ENCODE measurements at regions of chr7 and their contacts with region 1.

Region 1: DNA sequence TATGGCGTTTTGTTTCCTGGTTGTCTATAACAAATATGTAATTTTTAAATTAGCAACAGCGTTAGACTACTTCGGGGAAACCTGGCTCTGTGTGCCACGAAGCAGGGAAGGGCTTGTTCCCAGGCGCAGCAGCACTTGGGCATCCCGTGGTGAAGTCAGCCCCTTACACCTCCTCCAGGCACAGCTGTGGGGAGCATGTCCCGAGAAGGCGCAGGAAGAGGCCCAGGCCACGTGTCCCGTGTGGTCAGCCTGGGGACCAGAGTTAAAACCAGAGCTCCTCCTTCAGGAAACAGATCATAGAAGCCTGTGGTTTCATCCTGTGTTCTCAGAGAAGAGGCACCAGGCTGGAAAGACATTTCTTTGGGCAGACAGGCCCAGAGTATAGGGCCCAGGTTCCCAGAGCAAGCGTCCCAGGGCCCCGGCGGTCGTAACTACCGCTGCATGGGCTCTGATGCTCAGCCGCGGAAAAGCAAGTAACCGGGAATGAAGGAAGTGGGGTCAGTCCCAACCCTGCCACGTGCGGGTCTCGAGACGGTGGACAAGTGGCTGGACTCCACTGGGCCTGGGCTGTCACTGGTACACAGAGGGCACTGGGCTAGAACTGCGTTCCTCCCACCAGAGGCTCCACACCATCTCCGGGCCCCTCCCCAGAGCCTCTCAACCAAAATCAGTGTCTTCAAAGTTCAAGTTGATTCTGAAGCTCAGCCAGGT is 7.1 kb downstream of the NUDT1 start:
- DNase-seq: peak; percentile 78
- ATAC-seq: peak; percentile 73

Region 2: DNA sequence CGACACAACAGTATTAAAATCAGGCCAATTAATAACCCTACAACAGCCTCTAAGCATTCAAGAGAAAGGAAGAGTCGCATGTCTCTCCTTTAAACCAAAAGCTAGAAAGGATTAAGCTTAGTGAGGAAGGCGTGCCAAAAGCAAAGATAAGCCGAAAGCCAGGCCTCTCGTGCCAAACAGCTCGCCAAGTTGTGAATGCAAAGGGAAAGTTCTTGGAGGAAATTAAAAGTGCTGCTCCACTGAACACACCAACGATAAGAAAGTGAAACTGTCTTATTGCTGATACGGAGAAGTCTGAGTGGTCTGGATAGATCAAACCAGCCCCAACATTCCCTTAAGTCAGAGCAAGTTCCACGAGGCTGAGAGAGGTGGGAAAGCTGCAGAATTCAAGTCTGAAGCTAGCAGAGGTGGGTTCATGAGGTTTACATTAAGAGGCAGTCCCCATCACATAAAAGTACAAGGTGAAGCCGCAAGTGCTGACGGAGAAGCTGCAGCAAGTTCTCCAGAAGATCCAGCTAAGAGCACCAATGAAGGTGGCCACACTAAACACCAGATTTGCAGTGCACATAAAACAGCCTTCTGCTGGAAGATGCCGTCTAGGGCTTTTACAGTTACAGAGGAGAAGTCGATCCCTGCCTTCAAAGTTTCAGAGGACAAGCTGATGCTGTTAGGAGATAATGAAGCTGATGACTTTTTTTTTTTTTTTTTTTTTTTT is 211.2 kb before region 1 on chr7:
- intact Hi-C with region 1: no loop called
- DNase-seq: peak; percentile 66
- ATAC-seq: peak; percentile 84

Region 3: GRCh38 chr7:2354186-2354938 is 105.2 kb after region 1 on chr7 and contains the start of gene EIF3B:
- intact Hi-C with region 1: loop called (anchors 5 kb)
- DNase-seq: peak; percentile 93
- ATAC-seq: peak; percentile 96
- total RNA-seq, gene EIF3B: 68.0 TPM